K562 (cell line): ENCODE measurements at regions of chr20 and their contacts with region 1.

Region 1: DNA sequence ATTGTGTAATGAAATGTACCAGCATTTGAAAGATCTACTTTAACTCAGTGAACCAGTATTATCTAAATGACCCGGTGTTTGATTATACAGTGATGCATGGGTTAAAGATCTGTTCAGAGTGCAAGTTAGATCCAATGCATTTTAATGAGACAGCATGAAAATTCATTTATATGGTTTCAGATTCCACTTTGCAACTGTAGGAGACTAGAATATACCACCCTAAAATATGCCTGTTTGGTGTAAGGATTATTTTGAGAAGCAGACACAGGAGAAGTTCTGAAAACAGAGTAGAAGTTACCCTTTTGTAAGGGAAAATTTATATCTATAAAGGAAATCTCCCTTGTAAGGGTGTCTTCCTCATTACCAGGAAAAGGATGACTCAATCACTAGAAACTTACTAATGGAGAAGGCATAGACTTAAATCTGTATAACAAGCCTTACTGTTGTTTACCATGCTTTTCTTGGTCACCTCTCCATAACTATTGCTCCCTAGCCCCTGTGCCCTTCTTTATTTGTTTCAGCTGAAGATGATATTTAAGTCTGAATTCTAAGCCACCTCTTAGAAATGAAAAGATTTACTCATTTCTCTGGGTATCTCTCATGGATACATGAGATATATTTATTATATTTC is 105.4 kb downstream of the NCOA3 start:
- DNase-seq: peak in 3 of 4 experiments; percentile 13 to 68 (median 66)
- ATAC-seq: peak; percentile 75
- H3K4me3 ChIP-seq: no peak overlapping the region
- H3K27ac ChIP-seq: peak overlapping the region; percentile 86
- H3K4me1 ChIP-seq: peaks cover 6 to 47% of the 10 kb centered on the region in 2 experiments
- H3K27me3 ChIP-seq: no peaks in the 10 kb centered on the region
- CTCF ChIP-seq: no peak
- EP300 ChIP-seq: peak; percentile 96
- POLR2A ChIP-seq: peak; percentile 24; the same call in 1 of the 2 replicates
- RAD21 ChIP-seq: peak in 1 of 2 experiments; percentile 21; a peak in 1 of 4 replicates

Region 2: DNA sequence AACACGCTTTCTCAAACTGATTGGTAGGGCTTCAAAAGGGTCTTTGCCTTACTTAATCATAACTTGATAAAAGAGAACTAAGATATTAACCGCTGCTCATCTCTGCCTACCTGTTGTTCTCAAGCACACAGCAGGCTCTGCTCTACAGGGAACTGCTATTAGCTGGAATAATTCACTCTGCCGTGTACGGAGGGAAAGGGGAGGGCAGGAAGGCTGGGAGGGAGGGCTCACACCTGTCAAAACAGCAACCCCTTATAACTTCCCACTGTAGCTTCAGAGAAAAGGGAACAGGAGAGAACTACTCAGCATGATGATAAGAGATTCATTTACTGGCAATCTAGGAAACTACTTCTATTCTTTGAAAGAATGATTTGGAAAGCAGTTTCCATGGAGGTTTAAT is 325.7 kb before region 1 on chr20:
- CTCF ChIA-PET with region 1: no interaction called
- POLR2A ChIA-PET with region 1: no interaction called
- in situ Hi-C with region 1: loop called (anchors 10 kb)
- intact Hi-C with region 1: no loop called
- DNase-seq: no peak
- ATAC-seq: no peak
- H3K4me3 ChIP-seq: no peak overlapping the region
- H3K27ac ChIP-seq: no peak overlapping the region
- H3K4me1 ChIP-seq: peaks cover under 1 to 10% of the 10 kb centered on the region in 2 experiments; a peak in 4 of 5 replicates
- H3K27me3 ChIP-seq: no peaks in the 10 kb centered on the region
- CTCF ChIP-seq: no peak
- EP300 ChIP-seq: no peak
- POLR2A ChIP-seq: no peak
- RAD21 ChIP-seq: no peak

Region 3: GRCh38 chr20:47574616-47575364 is 32.3 kb before region 1 on chr20:
- CTCF ChIA-PET with region 1: no interaction called
- POLR2A ChIA-PET with region 1: interaction called, 3 read pairs
- in situ Hi-C with region 1: no loop called
- intact Hi-C with region 1: loop called (anchors 2 kb)
- DNase-seq: peak in 2 of 4 experiments; percentile 27 to 57
- ATAC-seq: peak; percentile 49
- H3K4me3 ChIP-seq: no peak overlapping the region
- H3K27ac ChIP-seq: peak overlapping the region; percentile 83; the same call in 2 of the 3 replicates
- H3K4me1 ChIP-seq: peaks cover 2 to 33% of the 10 kb centered on the region in 2 experiments; a peak in 4 of 5 replicates
- H3K27me3 ChIP-seq: no peaks in the 10 kb centered on the region
- CTCF ChIP-seq: no peak
- EP300 ChIP-seq: no peak
- POLR2A ChIP-seq: no peak
- RAD21 ChIP-seq: no peak

Region 4: DNA sequence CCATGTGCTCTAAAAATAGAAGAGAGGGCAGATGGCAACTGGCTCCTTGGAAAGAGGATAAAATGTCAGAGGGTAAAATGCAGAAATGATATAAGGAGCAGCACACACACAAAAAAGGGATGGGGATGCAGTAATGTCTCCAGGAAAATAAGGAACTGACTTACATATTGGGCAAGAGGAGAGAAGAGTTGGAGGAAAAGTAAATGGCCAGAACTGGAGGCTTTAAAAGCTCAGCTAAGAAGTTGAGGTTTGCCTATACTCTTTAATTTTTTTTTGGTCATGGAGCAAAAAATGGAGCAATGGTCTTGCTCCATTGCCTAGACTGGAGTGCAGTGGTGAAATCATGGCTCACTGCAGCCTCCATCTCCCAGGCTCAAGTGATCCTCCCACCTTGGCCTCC is 84.5 kb after region 1 on chr20:
- CTCF ChIA-PET with region 1: no interaction called
- POLR2A ChIA-PET with region 1: no interaction called
- in situ Hi-C with region 1: no loop called
- intact Hi-C with region 1: no loop called
- DNase-seq: no peak
- ATAC-seq: no peak
- H3K4me3 ChIP-seq: no peak overlapping the region
- H3K27ac ChIP-seq: no peak overlapping the region
- H3K4me1 ChIP-seq: no peaks in the 10 kb centered on the region; a peak in 1 of 5 replicates
- H3K27me3 ChIP-seq: peaks cover 27 to 53% of the 10 kb centered on the region in 2 experiments; a peak in 4 of 5 replicates
- CTCF ChIP-seq: no peak
- EP300 ChIP-seq: no peak
- POLR2A ChIP-seq: no peak
- RAD21 ChIP-seq: no peak